ENCODE measurements at regions of chr3 and their contacts with region 1.

Region 1: GRCh38 chr3:142279965-142280590 is 54.7 kb upstream of the GK5 start:
- DNase-seq: peak; percentile 11 to 60 (median 54)
- H3K4me3 ChIP-seq: no peak overlapping the region
- H3K4me3 Mint-ChIP-seq: peak overlapping the region in 1 of 7 donors; percentile 4
- H3K27ac ChIP-seq: no peak overlapping the region
- H3K27ac Mint-ChIP-seq: peak overlapping the region in 3 of 8 donors; percentile 14 to 75 (median 64)
- H3K4me1 ChIP-seq: peaks cover 9% of the 10 kb centered on the region
- H3K4me1 Mint-ChIP-seq: peaks cover 21 to 23% (median 22%) of the 10 kb centered on the region in 3 donors
- H3K27me3 ChIP-seq: no peaks in the 10 kb centered on the region
- H3K27me3 Mint-ChIP-seq: peaks cover 0 to 1% of the 10 kb centered on the region in 2 donors

Region 2: GRCh38 chr3:142124243-142124642 is 155.8 kb before region 1 on chr3:
- CTCF ChIA-PET with region 1: interaction called, 20 read pairs
- POLR2A ChIA-PET with region 1: no interaction called
- DNase-seq: no peak
- H3K4me3 ChIP-seq: no peak overlapping the region
- H3K4me3 Mint-ChIP-seq: no peak overlapping the region
- H3K27ac ChIP-seq: no peak overlapping the region
- H3K27ac Mint-ChIP-seq: no peak overlapping the region
- H3K4me1 ChIP-seq: no peaks in the 10 kb centered on the region
- H3K4me1 Mint-ChIP-seq: peaks cover 8 to 12% (median 9%) of the 10 kb centered on the region in 3 donors
- H3K27me3 ChIP-seq: no peaks in the 10 kb centered on the region
- H3K27me3 Mint-ChIP-seq: no peaks in the 10 kb centered on the region

Region 3: DNA sequence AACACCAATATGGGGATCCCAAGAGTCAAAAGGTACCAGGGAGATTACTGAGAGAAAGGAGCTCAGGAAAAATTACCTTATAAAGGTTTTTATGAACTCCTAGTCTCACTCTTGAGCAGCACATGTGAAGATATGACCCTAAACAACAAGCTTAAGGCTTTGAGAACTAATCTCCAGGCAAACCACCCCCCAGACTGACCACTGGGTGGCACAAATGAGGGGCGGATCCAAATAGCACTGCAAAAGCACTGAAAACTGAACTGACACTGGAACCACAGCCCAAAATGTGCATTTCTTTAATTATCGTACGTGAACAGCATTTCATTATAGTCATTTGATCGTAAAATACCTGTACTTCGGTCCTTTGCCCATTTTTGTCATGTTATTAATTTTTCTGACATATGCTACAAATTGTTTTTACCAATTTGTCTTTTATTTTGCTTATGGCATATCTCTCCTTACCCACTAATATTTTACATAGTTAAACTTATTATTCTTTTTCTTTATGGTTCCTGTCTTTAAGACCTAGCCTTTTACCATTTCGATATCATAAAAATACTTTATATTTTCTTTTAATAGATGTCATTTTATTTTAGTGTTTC is 99.2 kb before region 1 on chr3:
- CTCF ChIA-PET with region 1: interaction called, 17 read pairs
- POLR2A ChIA-PET with region 1: no interaction called
- DNase-seq: peak in 3 of 5 donors; percentile 1 to 21 (median 6)
- H3K4me3 ChIP-seq: no peak overlapping the region
- H3K4me3 Mint-ChIP-seq: no peak overlapping the region
- H3K27ac ChIP-seq: no peak overlapping the region
- H3K27ac Mint-ChIP-seq: peak overlapping the region in 2 of 8 donors; percentile 65 to 68
- H3K4me1 ChIP-seq: no peaks in the 10 kb centered on the region
- H3K4me1 Mint-ChIP-seq: no peaks in the 10 kb centered on the region
- H3K27me3 ChIP-seq: no peaks in the 10 kb centered on the region
- H3K27me3 Mint-ChIP-seq: no peaks in the 10 kb centered on the region

Region 4: DNA sequence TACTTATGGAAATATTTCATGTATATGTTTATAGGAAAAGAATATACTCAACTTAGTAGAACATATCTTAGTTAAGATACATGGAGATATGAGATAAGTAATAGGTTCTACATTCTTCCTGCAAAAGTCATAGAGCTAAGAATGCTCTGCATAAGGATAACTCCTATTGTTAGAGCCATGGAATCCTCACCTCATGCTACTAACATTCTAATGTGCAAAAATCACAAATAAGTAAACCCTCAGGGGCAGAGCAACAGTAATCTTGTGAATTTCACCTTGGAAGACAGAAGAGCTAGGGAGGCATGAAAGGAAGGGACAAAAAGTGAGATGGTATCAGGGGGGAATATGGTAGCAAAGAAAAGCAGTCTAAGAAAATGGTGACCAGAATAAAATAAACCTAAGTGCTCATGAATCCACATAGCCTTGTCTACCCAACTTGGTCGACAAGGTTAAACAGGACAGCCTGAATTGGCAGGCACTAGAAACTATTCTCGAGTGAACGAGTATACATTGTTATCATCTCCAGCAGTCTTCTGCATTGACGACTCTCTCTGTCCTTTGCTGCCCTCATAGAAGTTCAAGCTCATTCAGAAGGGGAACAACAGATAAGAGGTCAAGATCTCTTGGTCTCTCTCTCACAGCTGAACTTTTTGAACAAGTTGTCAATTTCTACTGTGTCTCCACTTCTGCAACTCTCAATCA is 115.0 kb after region 1 on chr3:
- CTCF ChIA-PET with region 1: no interaction called
- POLR2A ChIA-PET with region 1: no interaction called
- DNase-seq: no peak
- H3K4me3 ChIP-seq: no peak overlapping the region
- H3K4me3 Mint-ChIP-seq: no peak overlapping the region
- H3K27ac ChIP-seq: no peak overlapping the region
- H3K27ac Mint-ChIP-seq: no peak overlapping the region
- H3K4me1 ChIP-seq: no peaks in the 10 kb centered on the region
- H3K4me1 Mint-ChIP-seq: peaks cover 0 to 5% (median 0%) of the 10 kb centered on the region in 3 donors
- H3K27me3 ChIP-seq: no peaks in the 10 kb centered on the region
- H3K27me3 Mint-ChIP-seq: no peaks in the 10 kb centered on the region

Region 5: DNA sequence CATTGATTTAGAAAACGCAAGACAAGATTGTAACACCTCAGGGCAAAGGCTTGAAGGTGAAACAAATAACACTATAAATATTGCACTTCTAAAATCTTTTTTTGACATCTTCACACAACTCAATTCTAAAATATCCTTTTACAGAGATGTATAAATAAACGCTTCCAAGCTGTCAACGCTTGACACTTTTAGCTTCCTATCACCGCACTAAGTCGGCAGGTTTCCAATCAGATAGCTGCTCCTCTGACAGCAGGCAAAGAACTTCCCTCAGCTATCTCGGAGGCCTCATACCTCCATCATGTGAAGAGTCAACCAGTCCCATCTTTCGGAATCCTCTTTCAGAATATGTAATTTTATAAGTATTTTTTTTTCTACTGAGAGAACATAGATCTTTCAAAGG is 537.8 kb after region 1 on chr3:
- CTCF ChIA-PET with region 1: no interaction called
- POLR2A ChIA-PET with region 1: no interaction called
- DNase-seq: no peak
- H3K4me3 ChIP-seq: no peak overlapping the region
- H3K4me3 Mint-ChIP-seq: no peak overlapping the region
- H3K27ac ChIP-seq: no peak overlapping the region
- H3K27ac Mint-ChIP-seq: no peak overlapping the region
- H3K4me1 ChIP-seq: no peaks in the 10 kb centered on the region
- H3K4me1 Mint-ChIP-seq: no peaks in the 10 kb centered on the region
- H3K27me3 ChIP-seq: no peaks in the 10 kb centered on the region
- H3K27me3 Mint-ChIP-seq: peaks cover 6 to 36% of the 10 kb centered on the region in 2 donors